Prostate gland (tissue), 2 donors: ENCODE measurements at regions of chr16 and their contacts with region 1.

Region 1: GRCh38 chr16:29815793-29816693 is at the start of gene PAGR1:
- DNase-seq: peak; percentile 98
- H3K4me3 ChIP-seq: peak within 1 kb of the TSS; percentile 63 to 77
- H3K27ac ChIP-seq: peak within 1 kb of the TSS; percentile 96 to 98
- H3K4me1 ChIP-seq: peaks cover 4% of the 10 kb centered on the region
- H3K27me3 ChIP-seq: no peaks in the 10 kb centered on the region
- CTCF ChIP-seq: peak; percentile 89 to 95 (median 94)
- POLR2A ChIP-seq: peak; percentile 76
- total RNA-seq, gene PAGR1: 64.3 to 64.4 TPM

Region 2: DNA sequence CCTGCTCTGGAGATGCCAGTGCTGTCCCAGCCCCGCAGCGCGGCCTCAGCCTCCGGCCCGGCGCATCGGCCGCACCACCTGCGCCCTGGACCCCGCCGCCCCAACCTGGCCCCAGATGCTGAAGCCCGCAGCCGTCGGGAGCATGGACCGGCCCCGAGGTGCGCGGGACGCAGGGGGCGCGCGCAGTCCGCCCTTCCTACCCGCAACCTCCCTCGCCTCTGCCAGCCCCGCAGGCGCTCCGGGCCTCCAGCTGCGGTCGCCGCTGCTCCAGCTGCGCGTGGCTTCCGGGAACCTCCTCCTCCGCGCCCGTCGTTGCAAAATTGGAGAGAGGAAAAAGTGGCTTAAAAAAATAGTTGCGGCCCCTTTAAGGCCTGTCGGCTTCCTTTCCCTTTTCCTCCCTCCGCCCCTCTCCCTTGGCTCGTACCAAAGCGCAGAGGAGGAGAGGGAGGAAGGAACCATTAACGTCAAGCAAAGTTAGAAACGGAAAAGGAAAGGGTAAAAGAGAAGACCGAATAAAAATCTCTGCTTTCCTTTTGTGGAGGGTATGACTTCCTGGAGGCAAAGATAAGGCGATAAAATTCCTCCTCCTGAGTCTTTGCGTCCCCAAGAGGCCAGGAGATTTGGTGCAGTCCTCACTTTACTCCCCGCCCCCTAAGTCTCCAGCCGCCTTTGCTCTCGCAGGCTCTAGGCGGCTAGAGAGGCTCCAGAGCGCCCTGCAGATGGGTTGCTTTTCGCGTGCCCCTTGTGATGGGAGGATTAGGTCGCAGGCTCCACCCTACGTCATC is 47.0 kb after region 1 on chr16 and contains the start of gene CDIPT:
- intact Hi-C with region 1: loop called (anchors 5 kb)
- DNase-seq: peak; percentile 94
- H3K4me3 ChIP-seq: peak within 1 kb of the TSS; percentile 92 to 99
- H3K27ac ChIP-seq: peak within 1 kb of the TSS; percentile 81 to 96
- H3K4me1 ChIP-seq: peaks cover 10% of the 10 kb centered on the region
- H3K27me3 ChIP-seq: no peaks in the 10 kb centered on the region
- CTCF ChIP-seq: peak in 3 of 4 experiments; percentile 39 to 79 (median 79)
- POLR2A ChIP-seq: peak; percentile 30
- total RNA-seq, gene CDIPT: 121 to 132 TPM

Region 3: GRCh38 chr16:29961479-29962343 is 145.7 kb after region 1 on chr16 and contains the start of gene TMEM219:
- intact Hi-C with region 1: loop called (anchors 10 kb)
- DNase-seq: peak; percentile 88
- H3K4me3 ChIP-seq: peak within 1 kb of the TSS; percentile 70 to 71
- H3K27ac ChIP-seq: peak within 1 kb of the TSS; percentile 90 to 93
- H3K4me1 ChIP-seq: no peaks in the 10 kb centered on the region
- H3K27me3 ChIP-seq: no peaks in the 10 kb centered on the region
- CTCF ChIP-seq: peak; percentile 52 to 88 (median 79)
- POLR2A ChIP-seq: peak; percentile 74
- total RNA-seq, gene TMEM219: 188 to 218 TPM

Region 4: DNA sequence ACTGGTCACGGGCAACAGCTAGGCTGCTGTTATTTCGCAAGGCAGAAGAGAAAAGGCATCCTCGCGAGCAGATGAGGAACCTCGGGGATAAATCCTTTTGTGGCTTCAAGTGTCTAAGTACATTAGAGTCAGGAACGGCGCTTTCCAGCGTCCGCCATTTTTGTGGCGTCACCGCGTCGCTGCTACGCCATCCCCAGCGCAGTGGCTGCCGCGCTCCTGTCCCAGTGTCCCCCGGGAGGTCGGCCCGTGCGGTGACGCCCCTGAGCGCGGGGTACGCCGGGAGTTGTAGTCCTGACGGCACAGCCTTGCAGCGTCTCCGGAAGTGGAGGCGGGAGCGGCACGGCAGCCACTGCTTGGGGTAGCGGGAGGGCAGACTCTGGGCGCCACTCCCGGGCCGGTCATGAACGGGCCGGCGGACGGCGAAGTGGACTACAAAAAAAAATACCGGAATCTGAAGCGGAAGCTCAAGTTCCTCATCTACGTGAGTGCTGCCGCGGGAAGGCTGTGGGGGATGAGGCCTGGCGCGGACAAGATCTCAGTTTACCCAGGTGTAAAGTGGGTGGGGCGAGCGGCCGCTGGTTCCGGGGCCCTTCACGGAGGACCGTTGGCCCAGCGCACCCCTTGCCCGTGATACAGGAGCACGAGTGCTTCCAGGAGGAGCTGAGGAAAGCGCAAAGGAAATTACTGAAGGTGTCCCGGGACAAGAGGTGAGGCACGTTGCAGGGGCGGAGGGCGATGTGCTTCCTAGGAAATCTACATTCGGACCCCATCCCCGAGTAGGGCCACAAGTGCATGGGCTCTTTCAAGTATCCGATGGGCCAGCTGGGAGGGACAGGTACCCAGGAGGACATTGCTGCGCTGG is 180.1 kb after region 1 on chr16 and contains the start of gene INO80E:
- intact Hi-C with region 1: loop called (anchors 5 kb)
- DNase-seq: peak; percentile 98
- H3K4me3 ChIP-seq: peak within 1 kb of the TSS; percentile 68 to 78
- H3K27ac ChIP-seq: peak within 1 kb of the TSS; percentile 94 to 95
- H3K4me1 ChIP-seq: peaks cover 10% of the 10 kb centered on the region
- H3K27me3 ChIP-seq: no peaks in the 10 kb centered on the region
- CTCF ChIP-seq: peak in 2 of 4 experiments; percentile 13 to 36
- POLR2A ChIP-seq: peak; percentile 43
- total RNA-seq, gene INO80E: 51.8 to 113 TPM